ENCODE measurements at regions of chr6 and their contacts with region 1.

Region 1: DNA sequence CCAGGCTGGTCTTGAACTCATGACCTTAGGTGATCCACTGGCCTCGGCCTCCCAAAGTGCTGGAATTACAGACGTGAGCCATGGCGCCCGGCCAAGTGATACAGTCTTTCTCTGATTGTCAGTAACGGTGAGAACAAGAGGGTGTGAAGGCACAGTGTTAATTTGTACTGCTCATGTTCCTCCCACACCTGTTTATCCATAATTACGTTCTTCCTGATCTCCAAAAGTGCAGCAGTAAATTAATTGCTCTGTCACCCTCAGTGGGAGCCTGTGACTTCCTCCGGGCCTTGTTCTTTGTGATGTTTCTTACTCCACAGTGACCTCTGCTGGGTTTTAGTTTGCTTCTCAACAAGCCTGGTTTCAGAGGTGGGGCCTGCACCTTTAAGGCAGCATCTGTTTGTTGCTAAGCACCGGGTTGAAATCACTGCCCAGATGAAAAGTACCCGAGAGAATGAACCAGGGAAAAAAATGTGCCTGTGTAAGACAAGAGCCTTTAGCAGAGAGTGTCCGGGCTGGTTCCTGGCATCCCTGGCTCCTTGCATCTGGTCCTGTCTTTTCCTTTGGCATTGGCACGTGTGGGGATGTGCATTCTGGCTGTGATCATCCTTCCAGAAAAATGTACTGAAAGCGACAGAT is 89.1 kb upstream of the CLDN20 start:
- DNase-seq: no peak
- ATAC-seq: peak; percentile 73
- H3K4me3 Mint-ChIP-seq: no peak overlapping the region
- H3K27ac Mint-ChIP-seq: peak overlapping the region; percentile 48
- H3K4me1 Mint-ChIP-seq: peaks cover 47% of the 10 kb centered on the region
- H3K27me3 Mint-ChIP-seq: no peaks in the 10 kb centered on the region
- CTCF ChIP-seq: no peak

Region 2: DNA sequence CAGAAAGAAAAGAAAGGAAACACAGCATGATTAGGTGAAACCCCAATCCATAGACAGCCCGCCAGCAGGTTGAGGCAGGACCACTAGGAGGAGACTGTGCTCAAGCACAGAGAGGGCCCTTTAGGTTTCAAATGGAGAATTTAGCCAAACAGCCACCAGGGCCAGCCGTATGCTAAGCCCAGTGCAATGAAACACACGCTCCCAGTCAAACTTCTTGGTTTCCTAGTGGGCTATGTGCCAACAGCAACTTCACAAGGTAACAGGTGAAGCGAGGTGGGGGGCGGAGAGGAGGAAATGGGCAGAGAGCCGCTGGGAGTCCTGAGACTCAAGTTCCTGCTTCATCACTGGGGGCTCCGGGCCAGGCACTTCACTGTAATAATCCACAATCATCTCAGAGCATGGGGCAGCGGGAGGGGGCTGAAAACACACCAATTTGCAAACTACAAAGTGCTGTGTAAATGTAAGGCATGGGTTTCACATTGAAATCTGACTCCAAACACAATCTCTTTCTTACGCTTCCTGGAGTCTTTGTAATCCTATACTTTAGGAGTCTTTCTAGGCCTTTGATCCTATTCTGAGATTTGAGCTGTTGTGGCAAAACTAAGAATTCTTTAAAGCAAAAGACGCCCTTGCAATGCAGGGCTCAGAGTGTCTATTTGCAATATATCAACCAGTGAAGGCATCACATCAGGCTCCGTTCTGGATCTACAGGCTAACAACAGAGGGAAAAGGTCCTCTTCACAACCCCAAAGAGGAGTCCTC is 1018.4 kb before region 1 on chr6:
- CTCF ChIA-PET with region 1: no interaction called
- POLR2A ChIA-PET with region 1: no interaction called
- intact Hi-C with region 1: loop called (anchors 5 kb)
- DNase-seq: no peak
- ATAC-seq: peak; percentile 77
- H3K4me3 Mint-ChIP-seq: peak overlapping the region; percentile 41
- H3K27ac Mint-ChIP-seq: peak overlapping the region; percentile 18
- H3K4me1 Mint-ChIP-seq: peaks cover 23% of the 10 kb centered on the region
- H3K27me3 Mint-ChIP-seq: no peaks in the 10 kb centered on the region
- CTCF ChIP-seq: no peak

Region 3: GRCh38 chr6:154733012-154733625 is 441.6 kb before region 1 on chr6 and contains the start of gene SCAF8:
- CTCF ChIA-PET with region 1: no interaction called
- POLR2A ChIA-PET with region 1: no interaction called
- intact Hi-C with region 1: loop called (anchors 2 kb)
- DNase-seq: peak; percentile 94
- ATAC-seq: peak; percentile 77
- H3K4me3 Mint-ChIP-seq: peak within 1 kb of the TSS; percentile 89
- H3K27ac Mint-ChIP-seq: peak within 1 kb of the TSS; percentile 98
- H3K4me1 Mint-ChIP-seq: peaks cover 41% of the 10 kb centered on the region
- H3K27me3 Mint-ChIP-seq: no peaks in the 10 kb centered on the region
- CTCF ChIP-seq: no peak
- total RNA-seq, gene SCAF8: 56.8 and 65.2 TPM in 2 replicates

Region 4: GRCh38 chr6:154868143-154868594 is 306.5 kb before region 1 on chr6:
- CTCF ChIA-PET with region 1: interaction called, 15 read pairs
- POLR2A ChIA-PET with region 1: interaction called, 4 read pairs
- intact Hi-C with region 1: loop called (anchors 1 kb)
- DNase-seq: no peak
- ATAC-seq: peak; percentile 28
- H3K4me3 Mint-ChIP-seq: no peak overlapping the region
- H3K27ac Mint-ChIP-seq: no peak overlapping the region
- H3K4me1 Mint-ChIP-seq: no peaks in the 10 kb centered on the region
- H3K27me3 Mint-ChIP-seq: no peaks in the 10 kb centered on the region
- CTCF ChIP-seq: peak; percentile 86

Region 5: DNA sequence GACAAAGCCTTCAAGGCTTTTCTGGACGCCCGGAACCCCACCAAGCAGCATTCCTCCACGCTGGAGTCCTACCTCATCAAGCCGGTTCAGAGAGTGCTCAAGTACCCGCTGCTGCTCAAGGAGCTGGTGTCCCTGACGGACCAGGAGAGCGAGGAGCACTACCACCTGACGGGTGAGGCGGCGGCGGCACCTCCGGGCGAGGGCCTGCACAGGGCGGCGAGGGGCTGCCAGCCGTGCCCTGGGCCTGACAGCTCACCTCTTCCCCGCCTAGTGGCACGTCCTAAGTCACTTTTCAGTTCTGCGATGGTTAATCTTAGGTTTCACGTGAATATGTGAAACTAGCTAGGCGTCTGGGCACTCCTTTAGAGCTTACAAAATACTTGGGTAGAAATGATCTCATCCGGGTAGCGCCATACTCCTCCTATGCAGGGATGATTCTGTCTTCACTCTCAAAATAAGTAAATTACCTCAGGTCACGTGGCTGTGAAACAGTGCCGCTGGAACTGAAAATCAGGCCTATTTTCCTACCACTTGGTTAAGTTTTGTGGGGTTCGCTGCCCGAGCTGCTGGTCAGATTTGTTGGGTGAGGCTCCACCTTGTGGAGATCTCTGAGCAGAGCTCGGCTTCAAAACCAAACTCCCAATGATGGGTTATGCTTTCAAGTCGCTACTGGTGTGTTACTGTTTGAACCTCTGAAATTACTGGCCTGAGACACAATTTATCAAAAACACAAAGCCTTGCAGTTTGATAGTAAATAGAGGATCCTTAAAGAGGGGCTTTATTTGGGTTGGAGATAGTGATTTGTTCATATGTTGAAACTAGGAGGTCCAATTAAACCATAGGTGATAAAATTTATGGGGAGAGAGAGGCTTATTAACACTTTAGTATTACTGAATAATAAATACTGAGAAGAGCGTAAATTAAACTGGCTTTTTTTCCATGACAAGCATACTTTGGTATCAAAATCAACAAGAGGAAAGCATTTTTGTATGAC is 73.6 kb after region 1 on chr6:
- CTCF ChIA-PET with region 1: interaction called, 67 read pairs
- POLR2A ChIA-PET with region 1: interaction called, 14 read pairs
- intact Hi-C with region 1: loop called (anchors 1 kb)
- DNase-seq: no peak
- ATAC-seq: peak; percentile 49
- H3K4me3 Mint-ChIP-seq: no peak overlapping the region
- H3K27ac Mint-ChIP-seq: peak overlapping the region; percentile 25
- H3K4me1 Mint-ChIP-seq: peaks cover 3% of the 10 kb centered on the region
- H3K27me3 Mint-ChIP-seq: no peaks in the 10 kb centered on the region
- CTCF ChIP-seq: no peak

Region 6: GRCh38 chr6:155314092-155314772 is 139.5 kb after region 1 on chr6 and contains the start of gene TFB1M:
- CTCF ChIA-PET with region 1: interaction called, 9 read pairs
- POLR2A ChIA-PET with region 1: interaction called, 5 read pairs
- intact Hi-C with region 1: loop called (anchors 1 kb)
- DNase-seq: peak; percentile 90
- ATAC-seq: peak; percentile 94
- H3K4me3 Mint-ChIP-seq: peak within 1 kb of the TSS; percentile 97
- H3K27ac Mint-ChIP-seq: peak within 1 kb of the TSS; percentile 93
- H3K4me1 Mint-ChIP-seq: peaks cover 28% of the 10 kb centered on the region
- H3K27me3 Mint-ChIP-seq: no peaks in the 10 kb centered on the region
- CTCF ChIP-seq: no peak
- total RNA-seq, gene TFB1M: 35.2 and 41.5 TPM in 2 replicates

Region 7: DNA sequence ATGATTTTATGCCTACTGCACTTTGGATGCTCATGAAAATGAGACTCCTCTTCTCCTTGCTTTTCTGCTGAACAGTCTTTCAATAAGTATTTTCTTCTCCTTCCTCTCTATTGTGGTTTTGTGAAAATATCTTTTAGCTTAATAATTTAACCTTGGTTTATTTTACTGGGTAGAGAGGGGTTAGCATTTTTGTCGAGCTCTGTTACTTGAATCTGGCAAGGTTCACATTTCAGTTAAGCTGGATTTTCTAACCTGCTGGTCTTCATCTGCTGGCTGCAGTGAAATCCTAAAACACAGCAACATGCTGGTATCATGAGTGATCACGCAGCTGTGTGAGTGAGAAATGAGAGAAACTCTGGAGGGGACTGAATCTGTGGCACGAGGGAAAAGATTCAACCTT is 503.7 kb after region 1 on chr6:
- CTCF ChIA-PET with region 1: no interaction called
- POLR2A ChIA-PET with region 1: interaction called, 12 read pairs
- intact Hi-C with region 1: no loop called
- DNase-seq: no peak
- ATAC-seq: no peak
- H3K4me3 Mint-ChIP-seq: no peak overlapping the region
- H3K27ac Mint-ChIP-seq: no peak overlapping the region
- H3K4me1 Mint-ChIP-seq: no peaks in the 10 kb centered on the region
- H3K27me3 Mint-ChIP-seq: no peaks in the 10 kb centered on the region
- CTCF ChIP-seq: no peak